ENCODE measurements at regions of chr12 and their contacts with region 1.

Region 1: DNA sequence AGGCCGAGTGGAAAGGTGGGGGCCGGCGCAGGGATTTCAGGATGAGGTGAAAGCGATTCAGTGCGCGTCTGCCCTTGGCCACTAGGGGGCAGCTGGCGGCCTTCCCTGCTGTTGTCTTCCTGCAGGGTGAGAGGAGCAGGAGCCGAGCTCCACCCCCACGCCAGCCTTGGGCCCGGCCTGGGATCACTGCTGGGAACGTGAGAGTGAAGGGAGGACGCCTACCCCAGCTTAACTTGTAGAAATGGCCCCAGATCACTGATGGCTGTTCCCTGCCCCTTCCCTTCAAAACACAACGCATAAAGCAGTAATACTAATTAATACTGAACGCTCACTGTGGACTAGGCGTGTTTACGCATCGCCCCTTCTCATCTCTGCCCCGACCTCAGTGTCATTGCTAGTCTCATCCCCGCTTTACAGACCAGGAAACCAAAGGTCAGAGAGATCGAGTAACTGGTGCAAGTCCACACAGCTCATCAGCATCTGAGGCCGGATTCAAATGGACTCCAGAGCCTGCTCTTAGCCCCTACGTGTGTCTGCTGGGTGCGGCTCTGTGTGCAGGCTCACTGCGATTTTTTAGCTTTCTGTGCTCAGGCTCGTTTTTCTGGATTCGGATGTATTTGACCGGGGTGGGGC is 24.3 kb downstream of the MVK start:
- DNase-seq: peak; percentile 35 to 74 (median 52)
- ATAC-seq: peak; percentile 65
- H3K4me3 ChIP-seq: no peak overlapping the region
- H3K4me3 Mint-ChIP-seq: no peak overlapping the region
- H3K27ac ChIP-seq: no peak overlapping the region
- H3K27ac Mint-ChIP-seq: no peak overlapping the region
- H3K4me1 ChIP-seq: peaks cover 23% of the 10 kb centered on the region
- H3K4me1 Mint-ChIP-seq: peaks cover 26% of the 10 kb centered on the region
- H3K27me3 ChIP-seq: no peaks in the 10 kb centered on the region
- H3K27me3 Mint-ChIP-seq: no peaks in the 10 kb centered on the region
- CTCF ChIP-seq: peak; percentile 93

Region 2: GRCh38 chr12:109560867-109561710 is 36.8 kb before region 1 on chr12:
- CTCF ChIA-PET with region 1: no interaction called
- POLR2A ChIA-PET with region 1: no interaction called
- intact Hi-C with region 1: no loop called
- DNase-seq: no peak
- ATAC-seq: no peak
- H3K4me3 ChIP-seq: no peak overlapping the region
- H3K4me3 Mint-ChIP-seq: no peak overlapping the region
- H3K27ac ChIP-seq: no peak overlapping the region
- H3K27ac Mint-ChIP-seq: no peak overlapping the region
- H3K4me1 ChIP-seq: no peaks in the 10 kb centered on the region
- H3K4me1 Mint-ChIP-seq: no peaks in the 10 kb centered on the region
- H3K27me3 ChIP-seq: no peaks in the 10 kb centered on the region
- H3K27me3 Mint-ChIP-seq: no peaks in the 10 kb centered on the region
- CTCF ChIP-seq: no peak

Region 3: DNA sequence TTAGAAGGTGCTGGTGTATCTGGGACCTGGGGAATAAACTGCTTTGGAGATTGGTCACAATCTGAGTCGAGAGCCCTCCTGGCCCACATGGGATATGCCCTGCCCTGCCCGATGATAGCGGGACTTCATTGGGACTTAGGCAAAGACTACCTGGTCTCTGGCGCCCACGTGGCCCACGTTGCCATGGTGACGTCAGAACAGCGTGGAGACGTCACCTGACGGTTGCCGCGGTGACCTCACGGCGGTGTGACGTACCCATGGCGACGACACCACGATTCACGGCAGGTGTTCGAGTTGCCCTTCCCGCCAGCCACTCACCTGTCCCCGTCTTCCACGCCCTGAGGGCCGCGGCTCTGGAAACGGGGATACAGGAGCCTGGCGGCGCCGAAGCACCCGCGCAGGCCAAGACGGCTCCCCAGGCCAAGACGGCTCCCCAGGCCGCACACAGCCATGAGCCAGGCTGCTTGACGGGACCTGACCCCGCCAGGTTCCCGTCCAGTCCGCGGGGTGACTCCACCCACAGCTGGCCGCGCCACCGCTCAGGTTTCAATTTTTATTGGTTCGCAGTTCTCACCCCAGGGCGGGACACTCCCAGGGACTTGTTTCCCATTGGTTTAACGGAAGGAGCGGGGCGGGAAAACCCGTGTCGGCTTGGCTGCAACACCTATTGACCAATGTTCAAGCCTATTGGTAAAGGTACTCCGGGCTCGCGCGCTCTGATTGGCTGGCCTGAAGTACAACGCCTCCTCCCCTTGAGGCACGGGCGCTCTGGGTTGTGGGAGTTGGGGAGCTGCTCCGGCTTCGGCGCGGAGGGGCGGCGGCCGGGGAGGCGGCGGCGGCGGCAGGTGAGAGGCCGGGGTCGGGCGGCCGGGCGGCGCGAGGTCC is 24.6 kb before region 1 on chr12 and contains the starts of genes MMAB and MVK:
- CTCF ChIA-PET with region 1: interaction called, 12 read pairs
- POLR2A ChIA-PET with region 1: interaction called, 5 read pairs
- intact Hi-C with region 1: no loop called
- DNase-seq: peak; percentile 95 to 100 (median 98)
- ATAC-seq: peak; percentile 91
- H3K4me3 ChIP-seq: peak within 1 kb of the TSS; percentile 78
- H3K4me3 Mint-ChIP-seq: peak within 1 kb of the TSS; percentile 99
- H3K27ac ChIP-seq: peak within 1 kb of the TSS; percentile 83 to 96
- H3K27ac Mint-ChIP-seq: peak within 1 kb of the TSS; percentile 95
- H3K4me1 ChIP-seq: peaks cover 19% of the 10 kb centered on the region
- H3K4me1 Mint-ChIP-seq: peaks cover 29% of the 10 kb centered on the region
- H3K27me3 ChIP-seq: no peaks in the 10 kb centered on the region
- H3K27me3 Mint-ChIP-seq: no peaks in the 10 kb centered on the region
- CTCF ChIP-seq: no peak
- total RNA-seq, gene MMAB: 8.6 to 9.2 TPM
- total RNA-seq, gene MVK: 8.2 to 8.4 TPM

Measured in CD4-positive, alpha-beta T cell (primary cell).